Gastrocnemius medialis (tissue), 4 donors: ENCODE measurements at regions of chr11 and their contacts with region 1.

Region 1: GRCh38 chr11:60985991-60986915 is 14.8 kb downstream of the CD6 start:
- DNase-seq: no peak
- ATAC-seq: no peak
- H3K4me3 ChIP-seq: no peak overlapping the region
- H3K27ac ChIP-seq: no peak overlapping the region
- H3K4me1 ChIP-seq: no peaks in the 10 kb centered on the region
- H3K27me3 ChIP-seq: no peaks in the 10 kb centered on the region
- CTCF ChIP-seq: no peak
- POLR2A ChIP-seq: no peak

Region 2: DNA sequence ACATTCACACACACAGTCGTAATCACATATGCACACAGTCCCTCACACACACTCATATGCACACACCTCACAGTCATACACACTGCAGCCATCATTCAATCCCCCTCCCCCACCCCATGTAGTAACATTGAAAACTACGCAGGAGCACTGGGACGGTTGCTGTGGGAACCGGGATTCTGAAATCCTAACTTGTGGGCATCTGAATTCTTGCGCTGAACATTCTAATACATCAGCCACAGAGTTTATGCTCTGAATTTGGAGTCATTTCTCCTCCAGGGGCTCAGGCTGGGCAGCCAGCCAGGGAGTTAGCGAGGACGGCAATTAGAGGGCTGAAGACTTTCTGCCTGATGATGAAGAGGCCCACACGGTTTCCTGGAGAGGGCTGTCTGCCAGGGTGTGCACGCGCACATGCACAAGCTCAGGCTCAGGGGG is 17.9 kb after region 1 on chr11:
- in situ Hi-C with region 1: no loop called
- intact Hi-C with region 1: no loop called
- DNase-seq: no peak
- ATAC-seq: no peak
- H3K4me3 ChIP-seq: no peak overlapping the region
- H3K27ac ChIP-seq: no peak overlapping the region
- H3K4me1 ChIP-seq: peaks cover 0 to 6% of the 10 kb centered on the region in 2 donors
- H3K27me3 ChIP-seq: peaks cover 21 to 32% (median 28%) of the 10 kb centered on the region in 3 donors
- CTCF ChIP-seq: no peak
- POLR2A ChIP-seq: no peak

Region 3: GRCh38 chr11:61075891-61076290 is 89.6 kb after region 1 on chr11:
- in situ Hi-C with region 1: loop called in 1 of 4 experiments (anchors 25 kb)
- intact Hi-C with region 1: no loop called
- DNase-seq: no peak
- ATAC-seq: peak in 1 of 2 donors; percentile 51
- H3K4me3 ChIP-seq: no peak overlapping the region
- H3K27ac ChIP-seq: no peak overlapping the region
- H3K4me1 ChIP-seq: peaks cover 3 to 22% of the 10 kb centered on the region in 2 donors
- H3K27me3 ChIP-seq: no peaks in the 10 kb centered on the region
- CTCF ChIP-seq: no peak
- POLR2A ChIP-seq: no peak